Activated CD8-positive, alpha-beta T cell treated with anti-CD3 and anti-CD28 coated beads for 36 hours (primary cell): ENCODE measurements at regions of chr17 and their contacts with region 1.

Region 1: GRCh38 chr17:45948881-45949624 is 50.0 kb upstream of the STH start:
- DNase-seq: peak; percentile 73
- ATAC-seq: peak; percentile 99
- H3K4me3 Mint-ChIP-seq: peak overlapping the region; percentile 31
- H3K27ac Mint-ChIP-seq: no peak overlapping the region
- H3K4me1 Mint-ChIP-seq: peaks cover 9% of the 10 kb centered on the region
- H3K27me3 Mint-ChIP-seq: peaks cover 29% of the 10 kb centered on the region
- CTCF ChIP-seq: peak; percentile 88

Region 2: DNA sequence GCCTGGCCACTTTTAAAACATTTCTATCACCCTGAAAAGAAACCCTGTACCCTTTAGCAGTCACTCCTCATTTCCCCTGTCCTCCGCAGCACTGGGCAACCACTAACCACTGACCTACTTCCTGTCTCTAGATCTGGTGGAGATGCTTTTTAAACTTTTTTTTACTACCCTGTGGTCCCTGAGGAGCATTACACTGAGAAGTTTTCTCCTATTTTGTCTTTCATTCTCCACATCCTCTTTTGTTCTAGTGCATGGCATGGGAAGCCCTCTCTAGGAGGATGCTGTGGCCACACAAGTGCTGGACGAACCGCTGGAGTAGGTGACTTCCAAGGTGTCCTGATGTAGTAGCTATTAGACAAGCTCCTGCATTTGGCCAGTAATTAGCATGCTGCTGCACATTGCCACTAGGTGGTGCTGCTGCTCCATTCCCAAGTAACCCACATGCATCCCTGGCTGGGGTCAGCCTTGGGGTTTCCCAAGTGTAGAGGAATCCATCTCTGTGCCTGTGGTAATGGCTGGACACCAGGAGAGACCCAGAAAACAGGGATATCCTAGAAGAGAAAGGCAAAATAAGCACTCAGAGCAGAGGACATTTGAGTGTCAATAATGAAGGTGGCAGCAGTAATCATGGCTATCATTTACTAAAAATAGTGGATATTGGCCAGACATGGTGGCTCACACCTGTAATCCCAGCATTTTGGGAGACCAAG is 308.8 kb before region 1 on chr17:
- CTCF ChIA-PET with region 1: interaction called, 12 read pairs
- POLR2A ChIA-PET with region 1: interaction called, 3 read pairs
- intact Hi-C with region 1: no loop called
- DNase-seq: peak; percentile 77
- ATAC-seq: peak; percentile 89
- H3K4me3 Mint-ChIP-seq: no peak overlapping the region
- H3K27ac Mint-ChIP-seq: peak overlapping the region; percentile 39
- H3K4me1 Mint-ChIP-seq: peaks cover 5% of the 10 kb centered on the region
- H3K27me3 Mint-ChIP-seq: no peaks in the 10 kb centered on the region
- CTCF ChIP-seq: peak; percentile 90

Region 3: GRCh38 chr17:45894022-45894784 is 54.9 kb before region 1 on chr17 and contains the start of gene MAPT:
- CTCF ChIA-PET with region 1: interaction called, 14 read pairs
- POLR2A ChIA-PET with region 1: no interaction called
- intact Hi-C with region 1: no loop called
- DNase-seq: peak; percentile 85
- ATAC-seq: peak; percentile 92
- H3K4me3 Mint-ChIP-seq: peak within 1 kb of the TSS; percentile 75
- H3K27ac Mint-ChIP-seq: no peak within 1 kb of the TSS
- H3K4me1 Mint-ChIP-seq: peaks cover 19% of the 10 kb centered on the region
- H3K27me3 Mint-ChIP-seq: peaks cover 40% of the 10 kb centered on the region
- CTCF ChIP-seq: peak; percentile 88
- total RNA-seq, gene MAPT: 1.3 to 1.4 TPM

Region 4: GRCh38 chr17:45907750-45908395 is 41.2 kb before region 1 on chr17:
- CTCF ChIA-PET with region 1: interaction called, 18 read pairs
- POLR2A ChIA-PET with region 1: no interaction called
- intact Hi-C with region 1: no loop called
- DNase-seq: no peak
- ATAC-seq: no peak
- H3K4me3 Mint-ChIP-seq: no peak overlapping the region
- H3K27ac Mint-ChIP-seq: no peak overlapping the region
- H3K4me1 Mint-ChIP-seq: peaks cover 23% of the 10 kb centered on the region
- H3K27me3 Mint-ChIP-seq: peaks cover 28% of the 10 kb centered on the region
- CTCF ChIP-seq: no peak

Region 5: GRCh38 chr17:45961206-45961605 is 12.2 kb after region 1 on chr17:
- CTCF ChIA-PET with region 1: interaction called, 12 read pairs
- POLR2A ChIA-PET with region 1: no interaction called
- intact Hi-C with region 1: no loop called
- DNase-seq: no peak
- ATAC-seq: no peak
- H3K4me3 Mint-ChIP-seq: no peak overlapping the region
- H3K27ac Mint-ChIP-seq: no peak overlapping the region
- H3K4me1 Mint-ChIP-seq: no peaks in the 10 kb centered on the region
- H3K27me3 Mint-ChIP-seq: peaks cover 6% of the 10 kb centered on the region
- CTCF ChIP-seq: no peak

Region 6: DNA sequence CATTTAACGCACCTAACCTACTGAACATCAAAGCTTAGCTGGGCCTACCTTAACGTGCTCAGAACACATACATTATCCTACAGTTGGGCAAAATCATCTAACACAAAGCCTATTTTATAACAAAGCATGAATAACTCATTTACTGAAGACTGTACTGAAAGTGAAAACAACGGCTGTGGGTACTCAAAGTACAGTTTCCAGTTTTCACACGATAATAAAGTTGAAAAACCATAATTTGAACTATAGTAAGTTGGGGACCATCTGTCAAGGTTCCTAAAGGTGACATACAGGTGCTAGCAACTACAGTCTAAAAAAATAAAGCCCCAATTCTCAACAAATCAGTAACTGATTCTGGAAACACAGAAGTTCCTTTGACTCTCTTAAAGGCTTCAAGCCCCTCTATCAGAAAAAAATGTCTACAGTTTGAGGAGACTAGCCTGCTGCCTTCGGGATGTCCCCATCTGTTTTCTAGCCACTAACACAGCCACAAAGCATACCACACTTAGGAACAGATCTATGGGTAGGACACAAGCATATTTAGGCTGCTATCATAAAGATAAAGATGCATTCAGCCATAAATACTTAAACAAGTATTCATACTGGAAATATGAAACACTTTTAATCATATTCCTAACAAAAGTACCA is 172.9 kb after region 1 on chr17:
- CTCF ChIA-PET with region 1: no interaction called
- POLR2A ChIA-PET with region 1: no interaction called
- intact Hi-C with region 1: no loop called
- DNase-seq: peak; percentile 43
- ATAC-seq: peak; percentile 74
- H3K4me3 Mint-ChIP-seq: peak overlapping the region; percentile 34
- H3K27ac Mint-ChIP-seq: peak overlapping the region; percentile 62
- H3K4me1 Mint-ChIP-seq: peaks cover 81% of the 10 kb centered on the region
- H3K27me3 Mint-ChIP-seq: no peaks in the 10 kb centered on the region
- CTCF ChIP-seq: no peak